ENCODE measurements at regions of chr19 and their contacts with region 1.

Region 1: GRCh38 chr19:16185123-16185767 is at the start of gene FAM32A:
- DNase-seq: peak; percentile 98 to 99
- H3K4me3 ChIP-seq: peak within 1 kb of the TSS; percentile 87
- H3K27ac ChIP-seq: peak within 1 kb of the TSS; percentile 19; the same call in 1 of the 2 replicates
- H3K4me1 ChIP-seq: peaks cover 25% of the 10 kb centered on the region
- H3K27me3 ChIP-seq: no peaks in the 10 kb centered on the region
- CTCF ChIP-seq: no peak
- total RNA-seq, gene FAM32A: 44.3 and 66.5 TPM in 2 replicates

Region 2: GRCh38 chr19:15584541-15585115 is 600.6 kb before region 1 on chr19:
- CTCF ChIA-PET with region 1: no interaction called
- POLR2A ChIA-PET with region 1: no interaction called
- intact Hi-C with region 1: loop called (anchors 1 kb)
- DNase-seq: peak; percentile 68 to 78
- H3K4me3 ChIP-seq: no peak overlapping the region
- H3K27ac ChIP-seq: no peak overlapping the region
- H3K4me1 ChIP-seq: no peaks in the 10 kb centered on the region
- H3K27me3 ChIP-seq: peaks cover 19% of the 10 kb centered on the region
- CTCF ChIP-seq: peak; percentile 95

Region 3: GRCh38 chr19:15810335-15810734 is 374.9 kb before region 1 on chr19:
- CTCF ChIA-PET with region 1: no interaction called
- POLR2A ChIA-PET with region 1: interaction called, 5 read pairs
- intact Hi-C with region 1: loop called (anchors 2 kb)
- DNase-seq: peak; percentile 37 to 63
- H3K4me3 ChIP-seq: no peak overlapping the region
- H3K27ac ChIP-seq: no peak overlapping the region
- H3K4me1 ChIP-seq: peaks cover 6% of the 10 kb centered on the region; the same call in 1 of the 2 replicates
- H3K27me3 ChIP-seq: no peaks in the 10 kb centered on the region
- CTCF ChIP-seq: peak; percentile 63

Region 4: DNA sequence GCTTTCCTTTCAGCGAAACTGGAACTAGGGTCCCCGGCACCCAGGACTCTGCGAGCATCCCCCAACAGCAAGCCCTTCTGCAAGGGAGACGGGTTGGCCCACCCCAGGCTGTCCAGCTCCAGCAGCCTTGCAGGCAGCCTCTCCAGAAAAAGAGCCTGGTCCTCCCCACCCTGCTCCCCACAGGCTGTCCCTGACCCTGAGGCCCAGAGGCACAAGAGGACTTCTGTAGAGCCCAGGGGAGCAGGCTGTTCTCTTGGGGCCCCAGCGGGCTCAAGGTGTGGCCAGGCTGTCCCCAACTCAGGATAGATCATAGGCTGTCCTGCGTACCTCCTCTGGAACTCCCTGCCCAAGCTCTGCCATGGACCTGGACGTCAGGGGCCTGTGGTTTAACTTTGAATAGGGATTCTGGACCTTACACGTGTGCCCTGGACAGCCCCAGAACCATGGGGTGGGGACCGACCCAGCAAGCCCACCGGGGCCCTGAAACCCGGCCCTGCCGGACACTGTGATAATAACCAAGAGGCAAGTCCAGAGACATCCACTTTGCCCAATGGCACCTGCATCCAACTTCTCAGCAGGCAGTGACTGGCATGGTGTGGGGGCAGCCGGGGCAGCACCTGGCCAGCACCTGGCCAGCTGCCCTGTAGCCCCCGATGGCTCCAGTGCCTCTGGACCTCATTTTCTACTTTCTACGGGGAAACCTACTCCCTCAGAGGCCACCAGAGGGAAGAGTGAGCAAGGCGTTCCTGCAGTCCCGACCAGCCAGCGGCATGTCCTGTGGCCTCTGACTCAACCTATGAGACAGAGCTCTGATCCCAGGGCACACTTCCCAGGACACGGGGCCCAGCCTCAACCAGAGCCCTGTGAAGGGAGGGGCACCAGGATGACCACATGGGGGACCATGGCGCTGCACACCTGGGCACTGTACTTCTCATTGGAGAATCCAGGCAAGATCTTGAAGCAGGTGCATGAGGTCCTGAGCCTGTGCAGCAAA is 159.8 kb before region 1 on chr19:
- CTCF ChIA-PET with region 1: interaction called, 3 read pairs
- POLR2A ChIA-PET with region 1: no interaction called
- intact Hi-C with region 1: loop called (anchors 1 kb)
- DNase-seq: peak; percentile 67 to 81
- H3K4me3 ChIP-seq: no peak overlapping the region
- H3K27ac ChIP-seq: no peak overlapping the region
- H3K4me1 ChIP-seq: no peaks in the 10 kb centered on the region
- H3K27me3 ChIP-seq: no peaks in the 10 kb centered on the region
- CTCF ChIP-seq: peak; percentile 84

Region 5: GRCh38 chr19:16076154-16076957 is 108.9 kb before region 1 on chr19 and contains the start of gene TPM4:
- CTCF ChIA-PET with region 1: no interaction called
- POLR2A ChIA-PET with region 1: interaction called, 14 read pairs
- intact Hi-C with region 1: no loop called
- DNase-seq: peak; percentile 77 to 92
- H3K4me3 ChIP-seq: peak within 1 kb of the TSS; percentile 70
- H3K27ac ChIP-seq: peak within 1 kb of the TSS; percentile 99
- H3K4me1 ChIP-seq: peaks cover 43% of the 10 kb centered on the region
- H3K27me3 ChIP-seq: no peaks in the 10 kb centered on the region
- CTCF ChIP-seq: no peak
- total RNA-seq, gene TPM4: 279 and 307 TPM in 2 replicates

Region 6: DNA sequence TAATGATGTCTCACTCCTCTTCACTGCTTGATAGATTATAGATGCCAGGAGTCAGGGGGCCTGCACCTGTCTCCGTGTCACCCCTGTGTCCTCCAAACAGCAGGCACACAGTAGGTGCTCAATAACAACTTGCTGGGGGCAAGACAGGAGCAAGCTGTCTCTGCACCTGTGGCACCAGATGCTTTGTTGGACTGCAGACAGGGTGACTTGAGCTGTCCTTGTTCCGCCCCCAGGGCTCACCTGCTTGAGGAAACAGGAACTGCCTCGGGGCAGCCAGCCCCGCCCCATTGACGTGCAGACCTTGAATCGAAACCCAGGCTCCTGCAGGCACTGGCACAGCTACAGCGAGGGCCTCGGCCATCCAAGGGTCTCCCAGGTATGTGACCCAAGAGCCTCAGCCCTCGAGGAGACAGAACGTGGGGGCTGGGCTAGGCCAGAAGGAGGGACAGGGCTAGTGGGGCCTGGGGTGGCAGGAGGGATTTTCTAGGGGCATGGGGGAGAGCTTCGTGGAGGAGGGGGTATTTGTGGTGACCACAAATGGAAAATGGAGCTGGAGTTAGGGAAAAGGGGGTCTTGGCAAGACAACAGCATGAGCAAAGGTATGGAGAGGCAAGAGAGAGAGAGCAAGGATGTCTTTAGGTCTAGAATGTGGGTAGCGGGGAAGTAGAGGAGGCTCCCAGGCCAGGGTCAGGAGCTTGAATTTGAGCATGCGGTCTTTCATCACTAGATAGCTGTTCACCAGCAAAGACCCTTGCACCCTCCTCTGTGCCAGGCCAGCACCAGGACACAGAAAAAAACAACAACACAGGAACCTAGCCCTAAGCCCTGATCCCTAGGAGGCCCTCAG is 41.6 kb before region 1 on chr19 and contains the start of gene HSH2D:
- CTCF ChIA-PET with region 1: no interaction called
- POLR2A ChIA-PET with region 1: interaction called, 15 read pairs
- intact Hi-C with region 1: loop called (anchors 2 kb)
- DNase-seq: peak; percentile 88 to 94
- H3K4me3 ChIP-seq: peak within 1 kb of the TSS; percentile 52
- H3K27ac ChIP-seq: peak within 1 kb of the TSS; percentile 71
- H3K4me1 ChIP-seq: peaks cover 30% of the 10 kb centered on the region
- H3K27me3 ChIP-seq: no peaks in the 10 kb centered on the region
- CTCF ChIP-seq: no peak
- total RNA-seq, gene HSH2D: 10.9 and 13.7 TPM in 2 replicates

Measured in PC-9 (cell line).